Naive thymus-derived CD4-positive, alpha-beta T cell (primary cell): ENCODE measurements at regions of chr19 and their contacts with region 1.

Region 1: DNA sequence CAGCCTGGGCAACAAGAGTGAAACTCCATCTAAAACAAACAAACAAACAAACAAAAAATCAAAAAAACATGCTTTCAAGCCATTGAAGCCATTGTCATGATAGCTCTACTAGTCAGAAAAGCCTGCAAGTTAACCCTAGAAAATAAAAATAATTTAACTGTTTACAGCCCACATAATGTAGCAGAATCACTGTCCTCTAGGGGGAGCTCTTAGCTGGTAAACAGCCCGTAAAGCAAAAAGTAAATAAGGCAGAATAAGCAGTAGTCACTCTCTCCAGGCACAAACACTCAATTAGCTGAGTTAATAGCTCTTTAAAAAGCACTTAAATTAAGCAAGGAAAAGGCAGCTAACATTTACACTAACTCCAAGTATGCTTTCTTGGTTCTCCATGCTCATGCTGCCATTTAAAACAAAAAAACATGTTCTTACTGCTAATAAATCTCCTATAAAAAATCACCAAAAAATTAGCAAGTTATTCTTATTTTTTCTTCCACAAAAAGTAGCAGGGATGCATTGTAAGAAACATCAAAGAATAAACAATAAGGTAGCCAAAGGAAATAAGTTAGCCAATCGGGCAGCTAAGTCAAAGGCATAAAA is 11.3 kb downstream of the LILRB4 start:
- DNase-seq: no peak
- ATAC-seq: no peak
- H3K4me3 ChIP-seq: no peak overlapping the region
- H3K4me3 Mint-ChIP-seq: no peak overlapping the region
- H3K27ac ChIP-seq: no peak overlapping the region
- H3K27ac Mint-ChIP-seq: no peak overlapping the region
- H3K4me1 ChIP-seq: no peaks in the 10 kb centered on the region
- H3K4me1 Mint-ChIP-seq: peaks cover 0 to 3% (median 0%) of the 10 kb centered on the region in 7 donors
- H3K27me3 ChIP-seq: no peaks in the 10 kb centered on the region
- H3K27me3 Mint-ChIP-seq: peaks cover 8 to 41% (median 28%) of the 10 kb centered on the region in 5 donors

Region 2: DNA sequence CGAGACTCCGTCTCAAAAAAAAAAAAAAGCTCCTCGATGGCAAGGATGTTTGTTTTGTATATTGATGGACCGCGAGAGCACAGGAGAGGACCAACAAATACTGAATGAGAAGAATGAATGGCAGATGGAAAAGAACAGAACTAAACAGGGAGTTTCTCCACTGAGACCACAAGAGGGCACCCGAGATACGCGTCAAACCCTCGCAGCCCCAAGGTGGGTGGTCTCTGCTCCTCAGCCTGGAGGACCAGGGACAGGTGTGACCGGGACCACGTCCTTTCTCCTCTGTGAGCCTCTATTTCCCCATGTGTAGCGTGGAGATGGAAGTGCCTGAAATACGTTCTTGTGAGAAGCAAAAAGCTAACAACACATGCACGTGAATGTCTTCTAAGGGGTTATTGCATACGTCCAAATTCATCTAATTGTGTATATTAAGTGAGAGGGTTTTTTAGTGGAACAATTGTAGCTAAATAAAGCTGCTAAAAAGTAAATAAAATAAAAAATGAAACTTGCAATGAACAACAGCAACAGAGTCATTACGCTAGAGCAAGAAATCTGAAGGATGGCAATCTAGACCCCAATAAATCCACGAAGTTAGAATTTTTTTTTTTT is 192.7 kb before region 1 on chr19:
- CTCF ChIA-PET with region 1: interaction called, 6 read pairs
- POLR2A ChIA-PET with region 1: interaction called, 3 read pairs
- intact Hi-C with region 1: loop called in 1 of 2 experiments (anchors 1 kb)
- DNase-seq: peak in 6 of 9 donors; percentile 20 to 53 (median 43)
- ATAC-seq: peak; percentile 71
- H3K4me3 ChIP-seq: no peak overlapping the region
- H3K4me3 Mint-ChIP-seq: peak overlapping the region in 1 of 10 donors; percentile 32
- H3K27ac ChIP-seq: no peak overlapping the region
- H3K27ac Mint-ChIP-seq: no peak overlapping the region
- H3K4me1 ChIP-seq: peaks cover 0 to 5% of the 10 kb centered on the region in 2 donors
- H3K4me1 Mint-ChIP-seq: peaks cover 4 to 18% (median 6%) of the 10 kb centered on the region in 7 donors
- H3K27me3 ChIP-seq: no peaks in the 10 kb centered on the region
- H3K27me3 Mint-ChIP-seq: peaks cover 38 to 55% (median 45%) of the 10 kb centered on the region in 5 donors

Region 3: GRCh38 chr19:54653181-54653809 is 20.8 kb before region 1 on chr19:
- CTCF ChIA-PET with region 1: interaction called, 3 read pairs
- POLR2A ChIA-PET with region 1: no interaction called
- intact Hi-C with region 1: loop called in 1 of 2 experiments (anchors 1 kb)
- DNase-seq: peak in 1 of 9 donors; percentile 1
- ATAC-seq: peak; percentile 47
- H3K4me3 ChIP-seq: no peak overlapping the region
- H3K4me3 Mint-ChIP-seq: no peak overlapping the region
- H3K27ac ChIP-seq: no peak overlapping the region
- H3K27ac Mint-ChIP-seq: no peak overlapping the region
- H3K4me1 ChIP-seq: no peaks in the 10 kb centered on the region
- H3K4me1 Mint-ChIP-seq: no peaks in the 10 kb centered on the region
- H3K27me3 ChIP-seq: no peaks in the 10 kb centered on the region
- H3K27me3 Mint-ChIP-seq: peaks cover 0 to 30% (median 10%) of the 10 kb centered on the region in 5 donors